Sigmoid colon (tissue), 7 donors: ENCODE measurements at regions of chr17 and their contacts with region 1.

Region 1: DNA sequence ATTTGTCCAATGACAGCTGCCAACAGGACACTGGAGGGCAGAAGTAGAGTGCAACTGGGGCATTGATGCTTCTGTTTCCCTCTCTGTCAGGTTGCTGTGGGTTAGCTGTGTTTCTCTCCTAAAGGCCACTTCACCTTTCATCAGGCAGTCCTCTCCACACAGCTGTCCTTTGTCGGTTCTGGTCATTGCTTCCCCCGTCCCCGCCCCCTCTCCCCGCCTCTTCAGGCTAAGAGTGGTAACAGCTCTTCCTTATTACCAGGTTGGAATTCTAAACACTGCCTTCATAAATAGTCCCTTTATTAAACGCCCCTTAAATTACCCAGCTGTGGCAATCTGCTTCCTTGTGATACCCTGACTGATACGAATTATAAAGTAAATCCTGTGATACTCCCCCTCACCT is 31.8 kb upstream of the NSRP1 start:
- DNase-seq: no peak
- H3K4me3 ChIP-seq: no peak overlapping the region
- H3K27ac ChIP-seq: no peak overlapping the region
- H3K4me1 ChIP-seq: no peaks in the 10 kb centered on the region
- H3K27me3 ChIP-seq: peaks cover 0 to 10% (median 3%) of the 10 kb centered on the region in 3 donors
- CTCF ChIP-seq: no peak
- EP300 ChIP-seq: no peak
- POLR2A ChIP-seq: no peak

Region 2: GRCh38 chr17:29682054-29682453 is 402.7 kb before region 1 on chr17:
- intact Hi-C with region 1: no loop called
- DNase-seq: no peak
- H3K4me3 ChIP-seq: no peak overlapping the region
- H3K27ac ChIP-seq: peak overlapping the region in 3 of 4 donors; percentile 17 to 38 (median 37)
- H3K4me1 ChIP-seq: peaks cover 0 to 23% (median 11%) of the 10 kb centered on the region in 4 donors
- H3K27me3 ChIP-seq: no peaks in the 10 kb centered on the region
- CTCF ChIP-seq: no peak
- EP300 ChIP-seq: no peak
- POLR2A ChIP-seq: no peak

Region 3: DNA sequence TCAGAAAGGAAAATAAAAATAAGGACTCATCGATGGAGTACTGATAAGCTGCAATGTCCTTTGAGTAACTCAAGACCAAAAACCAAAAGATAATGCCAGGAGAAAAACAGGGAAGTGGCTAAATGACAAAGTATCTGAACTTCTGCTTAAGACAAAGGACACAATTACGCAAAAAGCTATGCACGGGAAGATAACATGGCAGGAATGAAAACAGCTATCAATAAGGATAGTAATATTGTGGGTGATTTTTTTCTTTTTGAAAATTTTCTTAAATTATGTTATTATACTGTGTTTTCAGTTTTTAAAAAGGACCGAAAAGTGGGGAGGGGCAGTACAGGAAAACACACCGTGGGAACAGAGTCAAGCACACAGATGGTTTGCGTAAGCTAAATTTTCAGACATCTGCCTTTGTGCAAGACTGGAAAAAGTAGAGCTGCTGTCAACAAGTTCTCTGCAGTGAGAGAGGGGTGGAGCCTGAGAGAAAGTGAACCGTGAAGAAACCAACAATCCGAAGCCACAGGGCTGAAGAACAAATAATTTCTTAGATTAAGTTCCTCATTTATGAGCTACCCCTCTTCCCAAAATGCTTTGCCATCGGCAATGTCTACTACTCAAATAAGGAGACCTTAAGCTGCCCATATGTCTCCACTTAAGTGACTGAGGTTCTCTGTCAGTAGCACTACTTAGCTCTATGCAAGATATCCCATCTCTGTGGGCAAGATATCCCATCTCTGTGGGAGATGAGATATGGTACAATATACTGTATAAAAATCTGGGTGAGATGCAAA is 362.2 kb before region 1 on chr17:
- intact Hi-C with region 1: loop called (anchors 5 kb)
- DNase-seq: peak; percentile 78
- H3K4me3 ChIP-seq: peak overlapping the region in 1 of 4 donors; percentile 5
- H3K27ac ChIP-seq: peak overlapping the region; percentile 38 to 71 (median 65)
- H3K4me1 ChIP-seq: peaks cover 0 to 21% (median 0%) of the 10 kb centered on the region in 4 donors
- H3K27me3 ChIP-seq: no peaks in the 10 kb centered on the region
- CTCF ChIP-seq: no peak
- EP300 ChIP-seq: no peak
- POLR2A ChIP-seq: no peak

Region 4: GRCh38 chr17:29789196-29790170 is 295.3 kb before region 1 on chr17:
- intact Hi-C with region 1: no loop called
- DNase-seq: no peak
- H3K4me3 ChIP-seq: no peak overlapping the region
- H3K27ac ChIP-seq: peak overlapping the region in 3 of 4 donors; percentile 5 to 48 (median 30)
- H3K4me1 ChIP-seq: peaks cover 0 to 7% (median 0%) of the 10 kb centered on the region in 4 donors
- H3K27me3 ChIP-seq: no peaks in the 10 kb centered on the region
- CTCF ChIP-seq: no peak
- EP300 ChIP-seq: no peak
- POLR2A ChIP-seq: no peak

Region 5: DNA sequence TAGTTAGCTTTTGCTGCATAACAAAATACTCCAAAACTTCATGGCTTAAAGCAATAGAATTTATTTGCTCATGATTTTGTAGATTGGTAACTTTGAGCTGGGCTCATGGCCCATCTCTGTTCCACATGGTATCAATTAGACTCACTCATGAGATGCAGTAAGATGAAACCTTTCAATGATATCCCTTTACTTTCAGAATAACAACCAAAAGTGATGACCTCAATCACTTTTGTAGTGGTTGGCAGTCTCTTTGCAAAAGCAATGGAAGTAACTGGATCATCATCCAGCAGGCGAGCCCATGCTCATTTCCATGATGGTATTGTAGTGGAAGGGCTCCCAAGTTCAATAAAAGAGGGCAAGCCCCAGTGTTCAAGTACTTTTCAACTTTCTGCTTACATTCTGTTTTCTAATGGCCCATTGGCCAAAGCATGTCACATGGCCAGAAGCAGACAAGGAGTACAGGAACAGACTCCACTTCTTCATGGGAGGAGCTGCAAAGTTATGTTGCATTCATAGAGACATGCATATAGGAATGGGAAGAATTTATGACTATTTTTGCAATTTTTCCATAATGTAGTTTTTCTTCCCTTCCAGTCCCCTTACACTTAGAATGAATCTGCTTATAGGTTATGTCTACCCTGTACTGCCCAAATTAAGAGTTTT is 101.7 kb before region 1 on chr17:
- intact Hi-C with region 1: no loop called
- DNase-seq: no peak
- H3K4me3 ChIP-seq: no peak overlapping the region
- H3K27ac ChIP-seq: no peak overlapping the region
- H3K4me1 ChIP-seq: no peaks in the 10 kb centered on the region
- H3K27me3 ChIP-seq: no peaks in the 10 kb centered on the region
- CTCF ChIP-seq: no peak
- EP300 ChIP-seq: no peak
- POLR2A ChIP-seq: no peak

Region 6: DNA sequence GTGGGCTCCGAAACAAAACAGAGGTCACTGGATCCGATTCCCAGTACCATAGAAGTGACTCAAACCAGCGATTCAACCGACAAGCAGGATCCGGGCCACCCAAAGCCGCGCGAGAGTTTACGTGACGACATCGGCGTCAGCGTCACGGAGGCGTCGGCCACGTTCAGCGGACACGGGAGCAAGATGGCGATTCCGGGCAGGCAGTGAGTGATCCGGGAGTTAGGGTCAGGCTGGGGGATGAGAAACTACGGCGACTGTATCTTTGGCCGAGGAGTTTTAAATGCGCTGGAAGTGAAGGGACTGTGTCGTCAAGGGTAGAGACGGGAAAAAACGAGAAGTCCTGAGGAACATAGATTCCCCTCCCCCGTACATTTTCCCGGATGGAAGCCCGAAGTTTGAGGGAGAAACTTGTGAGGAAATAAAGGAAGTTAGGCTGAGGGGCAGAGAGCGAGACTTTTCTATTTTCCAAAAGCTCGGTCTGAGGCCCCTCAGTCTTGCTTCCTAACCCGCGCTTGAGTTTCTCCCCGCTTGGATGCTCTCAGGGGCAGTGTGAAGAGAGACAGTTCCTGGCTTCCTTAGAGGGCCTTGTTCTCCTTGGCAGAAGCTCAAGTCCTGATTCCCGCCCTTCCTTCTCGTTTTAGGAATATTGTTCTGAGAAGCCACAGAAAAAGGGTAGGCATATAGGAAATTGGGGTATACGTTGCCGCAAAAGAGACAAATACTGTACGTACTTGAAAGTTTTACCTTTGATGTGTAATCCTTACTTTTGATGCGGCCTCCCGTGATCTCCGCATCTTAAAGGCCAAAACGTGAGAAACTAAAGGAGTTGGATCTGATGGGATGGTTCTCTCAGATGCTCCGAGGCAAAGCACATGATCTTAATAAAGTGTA is 32.1 kb after region 1 on chr17 and contains the start of gene NSRP1:
- intact Hi-C with region 1: no loop called
- DNase-seq: peak; percentile 98
- H3K4me3 ChIP-seq: peak within 1 kb of the TSS; percentile 60 to 67 (median 64)
- H3K27ac ChIP-seq: peak within 1 kb of the TSS; percentile 89 to 98 (median 94)
- H3K4me1 ChIP-seq: peaks cover 0 to 43% (median 28%) of the 10 kb centered on the region in 4 donors
- H3K27me3 ChIP-seq: no peaks in the 10 kb centered on the region
- CTCF ChIP-seq: no peak
- EP300 ChIP-seq: peak in 1 of 4 donors; percentile 23
- POLR2A ChIP-seq: peak; percentile 94 to 96
- total RNA-seq, gene NSRP1: 30.4 to 47.6 (median 41.6) TPM